ENCODE measurements at regions of chr11 and their contacts with region 1.

Region 1: DNA sequence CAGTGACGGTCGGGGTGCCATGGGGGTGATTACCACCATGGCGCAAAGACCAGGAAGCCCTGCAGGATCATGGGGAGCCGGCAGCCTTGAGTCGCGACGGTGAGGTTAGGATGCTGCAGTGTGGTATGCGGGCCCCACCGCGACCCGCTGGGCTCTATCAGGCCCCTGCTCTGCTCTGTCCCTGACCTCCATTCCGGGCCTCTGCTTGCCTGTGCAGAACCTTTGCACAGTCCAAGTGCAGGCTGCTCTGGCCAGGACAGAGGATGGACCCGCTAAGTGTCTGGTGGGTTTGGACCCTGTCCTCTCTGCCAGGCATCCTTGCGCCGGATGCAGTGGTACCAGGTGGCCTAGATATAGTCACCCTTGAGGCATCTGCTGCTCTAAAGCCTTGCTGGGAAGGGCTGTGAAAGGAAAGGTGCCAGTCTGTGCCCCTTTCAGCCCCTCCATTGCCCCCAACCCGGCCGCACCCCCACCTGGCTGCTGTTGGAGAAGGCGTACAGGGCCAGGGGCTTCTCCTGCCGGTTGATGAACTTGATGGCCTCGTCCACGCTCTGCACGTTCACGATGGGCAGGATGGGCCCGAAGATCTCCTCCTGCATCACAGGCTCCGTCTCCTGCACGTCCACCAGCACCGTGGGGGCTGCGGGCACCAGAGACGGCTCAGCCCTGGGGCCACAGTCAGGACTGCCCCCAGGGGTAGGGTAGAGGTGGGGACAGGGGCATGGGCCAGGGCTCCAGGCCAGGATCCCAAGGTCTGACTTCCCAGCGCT is 10.3 kb downstream of the ALDH3B2 start:
- DNase-seq: no peak
- ATAC-seq: no peak
- H3K4me3 ChIP-seq: no peak overlapping the region
- H3K27ac ChIP-seq: no peak overlapping the region
- H3K4me1 ChIP-seq: no peaks in the 10 kb centered on the region
- H3K27me3 ChIP-seq: no peaks in the 10 kb centered on the region
- CTCF ChIP-seq: no peak

Region 2: GRCh38 chr11:67439321-67439883 is 224.7 kb before region 1 on chr11:
- intact Hi-C with region 1: no loop called
- DNase-seq: no peak
- ATAC-seq: peak in 2 of 8 donors; percentile 1 to 3
- H3K4me3 ChIP-seq: peak overlapping the region in 1 of 10 donors; percentile 59
- H3K27ac ChIP-seq: peak overlapping the region in 8 of 10 donors; percentile 28 to 93 (median 50)
- H3K4me1 ChIP-seq: peaks cover 14 to 66% (median 45%) of the 10 kb centered on the region in 9 donors
- H3K27me3 ChIP-seq: no peaks in the 10 kb centered on the region
- CTCF ChIP-seq: peak in 4 of 9 donors; percentile 14 to 23 (median 21)

Region 3: DNA sequence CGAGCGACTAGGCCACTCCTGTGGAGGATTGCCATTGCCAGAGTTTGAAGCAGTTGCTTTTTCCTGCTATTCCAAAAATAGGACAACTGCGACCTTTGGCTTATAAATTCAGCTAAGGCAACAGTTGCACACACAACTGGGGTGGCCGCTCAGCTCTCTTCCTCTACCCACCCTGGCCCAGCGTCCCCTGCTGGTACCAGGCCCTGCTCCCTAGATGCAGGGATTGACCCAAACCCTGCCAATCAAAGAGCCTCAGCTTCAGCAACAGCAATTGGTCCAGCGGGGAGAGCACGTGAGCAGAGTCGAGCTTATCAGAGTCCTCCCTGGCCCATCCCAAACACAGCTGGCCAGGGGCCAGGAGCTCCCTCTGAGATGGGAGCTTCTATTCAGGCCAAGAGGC is 118.8 kb before region 1 on chr11:
- intact Hi-C with region 1: no loop called
- DNase-seq: peak; percentile 68 to 69
- ATAC-seq: peak; percentile 78 to 93 (median 91)
- H3K4me3 ChIP-seq: no peak overlapping the region
- H3K27ac ChIP-seq: peak overlapping the region; percentile 29 to 72 (median 57)
- H3K4me1 ChIP-seq: peaks cover 0 to 18% (median 13%) of the 10 kb centered on the region in 9 donors
- H3K27me3 ChIP-seq: no peaks in the 10 kb centered on the region
- CTCF ChIP-seq: peak in 7 of 9 donors; percentile 33 to 52 (median 38)

Region 4: GRCh38 chr11:67572747-67573419 is 91.2 kb before region 1 on chr11:
- intact Hi-C with region 1: loop called in 5 of 10 experiments (anchors 5 to 10 kb)
- DNase-seq: peak; percentile 34
- ATAC-seq: peak in 2 of 8 donors; percentile 33 to 52
- H3K4me3 ChIP-seq: no peak overlapping the region
- H3K27ac ChIP-seq: no peak overlapping the region
- H3K4me1 ChIP-seq: no peaks in the 10 kb centered on the region
- H3K27me3 ChIP-seq: peaks cover 0 to 24% (median 7%) of the 10 kb centered on the region in 7 donors
- CTCF ChIP-seq: peak; percentile 47 to 86 (median 76)

Region 5: GRCh38 chr11:67691149-67691548 is 27.0 kb after region 1 on chr11:
- intact Hi-C with region 1: loop called in 1 of 10 experiments (anchors 1 kb)
- DNase-seq: no peak
- ATAC-seq: no peak
- H3K4me3 ChIP-seq: no peak overlapping the region
- H3K27ac ChIP-seq: no peak overlapping the region
- H3K4me1 ChIP-seq: no peaks in the 10 kb centered on the region
- H3K27me3 ChIP-seq: peaks cover 0 to 25% (median 1%) of the 10 kb centered on the region in 7 donors
- CTCF ChIP-seq: peak in 5 of 9 donors; percentile 19 to 47 (median 28)

Region 6: GRCh38 chr11:67820081-67820480 is 156.0 kb after region 1 on chr11:
- intact Hi-C with region 1: no loop called
- DNase-seq: no peak
- ATAC-seq: no peak
- H3K4me3 ChIP-seq: no peak overlapping the region
- H3K27ac ChIP-seq: no peak overlapping the region
- H3K4me1 ChIP-seq: no peaks in the 10 kb centered on the region
- H3K27me3 ChIP-seq: peaks cover 0 to 13% (median 4%) of the 10 kb centered on the region in 7 donors
- CTCF ChIP-seq: no peak

Region 7: DNA sequence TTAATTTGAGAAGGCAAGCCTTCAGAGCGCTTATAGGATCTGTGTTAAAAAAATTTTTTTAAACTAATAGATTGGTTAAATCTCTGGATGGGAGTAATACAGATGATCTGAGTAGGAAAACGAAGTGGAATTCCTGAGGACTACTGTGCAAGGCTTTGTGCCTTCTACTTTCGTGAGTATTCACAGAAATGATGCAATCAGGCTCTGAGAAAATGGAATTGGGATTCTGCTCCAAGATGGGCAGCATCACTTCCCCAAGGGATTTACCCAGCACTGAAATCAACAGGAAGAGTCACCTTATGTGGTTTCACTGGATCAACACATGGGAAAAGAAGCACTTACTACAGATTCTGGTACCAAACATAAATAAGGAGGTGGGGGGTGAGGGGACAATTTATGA is 536.5 kb after region 1 on chr11:
- intact Hi-C with region 1: no loop called
- DNase-seq: no peak
- ATAC-seq: peak in 1 of 8 donors; percentile 62
- H3K4me3 ChIP-seq: no peak overlapping the region
- H3K27ac ChIP-seq: no peak overlapping the region
- H3K4me1 ChIP-seq: peaks cover 0 to 95% (median 53%) of the 10 kb centered on the region in 9 donors
- H3K27me3 ChIP-seq: no peaks in the 10 kb centered on the region
- CTCF ChIP-seq: no peak

Measured in heart right ventricle (tissue), 16 donors.